ENCODE measurements at regions of chr17 and their contacts with region 1.

Region 1: GRCh38 chr17:10226930-10227685 is 28.7 kb upstream of the GAS7 start:
- DNase-seq: peak; percentile 75
- ATAC-seq: peak; percentile 88

Region 2: DNA sequence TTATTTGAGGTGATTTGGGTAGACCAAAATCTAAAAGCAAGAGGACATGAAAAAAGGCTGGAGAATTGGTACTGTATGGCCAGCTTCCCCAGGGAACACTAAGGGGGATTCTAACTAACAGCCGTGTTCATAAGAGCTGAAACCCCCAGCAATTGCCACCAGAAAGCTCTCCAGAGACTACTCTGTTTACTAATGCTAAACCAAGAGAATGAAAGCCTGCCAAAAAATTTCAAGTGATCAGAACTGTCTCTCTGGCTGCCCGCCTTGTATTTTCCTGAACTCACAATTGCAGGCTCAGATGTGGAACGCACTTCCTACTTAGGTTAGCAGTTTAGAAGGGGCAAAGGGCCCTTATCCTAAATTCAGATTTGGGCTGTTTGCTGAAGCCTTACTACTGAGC is 1620.7 kb before region 1 on chr17:
- intact Hi-C with region 1: no loop called
- DNase-seq: no peak
- ATAC-seq: peak; percentile 39

Region 3: GRCh38 chr17:9850151-9850550 is 377.0 kb before region 1 on chr17:
- intact Hi-C with region 1: no loop called
- DNase-seq: no peak
- ATAC-seq: no peak

Region 4: GRCh38 chr17:9924735-9925191 is 302.3 kb before region 1 on chr17:
- intact Hi-C with region 1: loop called (anchors 5 kb)
- DNase-seq: no peak
- ATAC-seq: peak; percentile 76

Measured in sciatic nerve (tissue), 2 donors.